Lower leg skin (tissue), 4 donors: ENCODE measurements at regions of chr2 and their contacts with region 1.

Region 1: DNA sequence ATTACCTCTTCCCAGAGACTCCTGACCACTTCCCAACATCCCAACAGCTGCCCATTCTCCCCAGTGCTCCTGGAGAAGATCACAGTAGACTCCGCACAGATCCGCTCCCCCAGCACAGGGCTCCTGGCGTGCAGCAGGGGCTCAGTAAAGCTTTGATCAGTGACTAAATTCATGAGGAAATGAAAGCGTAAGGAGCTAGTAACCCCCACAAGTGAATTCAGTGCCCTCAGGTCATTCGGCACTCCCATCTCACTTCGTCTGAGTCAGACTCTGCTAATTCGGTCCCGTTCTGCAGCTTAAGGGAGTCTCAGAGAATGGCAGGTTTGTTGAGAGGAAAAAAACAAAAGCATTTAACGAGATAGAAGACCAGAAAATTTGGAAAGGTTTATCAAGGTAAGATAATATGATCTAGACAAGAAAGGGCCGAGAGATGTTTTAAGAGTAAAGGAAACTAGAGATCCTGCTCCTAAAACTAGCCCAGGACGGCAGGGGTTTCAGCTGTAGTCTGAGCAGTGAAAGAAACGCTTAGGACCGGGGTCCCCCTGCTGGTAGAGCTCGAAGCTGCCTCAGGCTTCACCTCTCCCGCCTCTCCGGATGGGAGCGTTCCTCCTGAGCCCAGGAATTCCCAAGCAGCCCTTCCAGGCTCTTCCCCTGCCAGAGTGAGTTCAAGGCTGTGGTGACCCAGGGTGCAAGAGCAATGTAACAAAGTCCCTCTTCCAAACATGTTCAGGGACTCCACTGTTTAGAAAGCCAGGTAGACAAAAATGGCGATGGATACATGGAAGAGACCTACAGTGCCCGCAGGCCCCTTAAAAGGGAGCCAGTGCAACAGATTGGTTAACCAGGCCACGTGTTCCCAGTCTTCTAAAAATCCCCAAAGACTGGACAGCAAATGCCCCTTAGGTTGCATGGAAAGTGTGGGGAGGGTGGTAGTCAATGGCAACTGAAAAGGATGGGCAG is 127.3 kb downstream of the DNER start:
- DNase-seq: peak; percentile 79 to 95
- H3K4me3 ChIP-seq: no peak overlapping the region
- CTCF ChIP-seq: peak in 1 of 3 donors; percentile 37
- POLR2A ChIP-seq: no peak

Region 2: DNA sequence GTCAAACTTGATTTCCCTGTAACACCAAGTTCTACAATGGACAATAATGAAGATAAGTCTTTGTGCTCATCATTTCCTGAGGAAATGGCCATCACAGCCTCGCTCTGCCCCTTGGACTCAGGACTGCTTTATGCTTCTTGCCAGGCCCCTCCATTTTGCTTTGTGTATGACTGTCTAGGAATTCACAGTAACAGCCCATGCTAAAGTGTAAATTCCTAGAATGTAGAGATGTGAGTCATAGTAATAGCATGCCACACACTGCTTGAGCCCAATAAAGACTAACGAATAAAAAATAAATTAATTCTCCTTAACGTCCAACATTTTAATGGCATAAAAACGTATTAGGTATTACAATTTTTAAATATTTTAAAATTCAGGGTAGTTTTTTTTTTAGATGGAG is 542.4 kb before region 1 on chr2:
- intact Hi-C with region 1: no loop called
- DNase-seq: no peak
- H3K4me3 ChIP-seq: no peak overlapping the region
- CTCF ChIP-seq: no peak
- POLR2A ChIP-seq: no peak

Region 3: DNA sequence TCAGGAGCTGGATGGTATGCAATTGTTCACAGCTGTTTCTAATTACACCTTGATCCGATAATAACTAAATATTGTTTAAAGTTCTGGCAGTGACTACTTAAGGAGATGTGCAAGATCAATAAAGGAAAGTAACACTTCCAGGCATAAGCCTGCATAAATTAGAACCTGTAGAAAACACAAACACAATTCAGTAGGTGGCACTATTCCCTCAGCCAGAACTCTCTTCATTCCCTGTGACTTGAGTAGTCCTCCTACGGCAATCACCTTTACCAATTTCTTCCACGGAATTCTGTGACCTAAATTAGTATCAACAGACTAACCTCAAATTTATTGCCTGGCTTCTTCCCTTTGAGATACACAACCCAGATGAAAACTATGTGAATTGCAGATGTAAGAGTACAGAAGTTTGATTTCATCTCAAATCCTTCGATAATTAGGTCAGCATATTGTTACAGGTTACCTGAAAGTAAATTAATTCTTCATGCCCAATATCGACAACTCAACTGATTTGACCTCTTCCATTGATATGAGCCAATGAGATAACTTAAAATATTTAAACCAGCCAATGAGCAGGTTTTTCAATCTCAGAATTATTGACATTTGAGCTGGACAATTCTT is 453.8 kb before region 1 on chr2:
- intact Hi-C with region 1: loop called (anchors 10 kb)
- DNase-seq: no peak
- H3K4me3 ChIP-seq: no peak overlapping the region
- CTCF ChIP-seq: no peak
- POLR2A ChIP-seq: no peak

Region 4: GRCh38 chr2:229392196-229392595 is 194.8 kb before region 1 on chr2:
- intact Hi-C with region 1: no loop called
- DNase-seq: no peak
- H3K4me3 ChIP-seq: no peak overlapping the region
- CTCF ChIP-seq: no peak
- POLR2A ChIP-seq: no peak

Region 5: DNA sequence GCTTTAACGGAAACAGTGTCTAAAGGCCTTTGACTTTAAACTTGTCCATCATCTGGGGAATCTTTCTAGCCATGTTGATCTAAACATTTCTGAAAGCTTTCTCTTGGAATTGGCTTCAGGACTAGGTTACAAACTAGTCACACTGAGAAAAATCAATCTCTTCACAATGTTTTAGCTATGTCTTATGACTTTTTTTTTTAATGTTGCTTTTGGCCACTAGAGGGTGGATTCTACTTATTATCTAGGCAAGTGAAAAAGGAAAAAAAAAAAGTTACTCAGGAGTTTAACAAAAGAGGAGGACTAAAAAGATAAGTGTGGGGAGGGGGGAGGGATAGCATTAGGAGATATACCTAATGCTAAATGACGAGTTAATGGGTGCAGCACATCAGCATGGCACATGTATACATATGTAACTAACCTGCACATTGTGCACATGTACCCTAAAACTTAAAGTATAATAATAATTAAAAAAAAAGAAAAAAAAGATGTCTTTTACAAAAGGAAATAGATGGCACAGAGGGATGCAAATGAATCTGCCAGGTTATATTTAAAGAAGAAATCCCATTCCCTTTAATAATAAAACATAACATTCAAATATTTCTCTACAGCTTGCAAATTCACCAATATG is 155.6 kb before region 1 on chr2:
- intact Hi-C with region 1: loop called (anchors 10 kb)
- DNase-seq: no peak
- H3K4me3 ChIP-seq: no peak overlapping the region
- CTCF ChIP-seq: no peak
- POLR2A ChIP-seq: no peak